ENCODE measurements at regions of chr12 and their contacts with region 1.

Region 1: GRCh38 chr12:8590842-8591550 is 21.7 kb downstream of the AICDA start:
- DNase-seq: no peak
- ATAC-seq: peak; percentile 57
- H3K4me3 Mint-ChIP-seq: no peak overlapping the region
- H3K27ac Mint-ChIP-seq: no peak overlapping the region
- H3K4me1 Mint-ChIP-seq: peaks cover 6% of the 10 kb centered on the region
- H3K27me3 Mint-ChIP-seq: no peaks in the 10 kb centered on the region

Region 2: DNA sequence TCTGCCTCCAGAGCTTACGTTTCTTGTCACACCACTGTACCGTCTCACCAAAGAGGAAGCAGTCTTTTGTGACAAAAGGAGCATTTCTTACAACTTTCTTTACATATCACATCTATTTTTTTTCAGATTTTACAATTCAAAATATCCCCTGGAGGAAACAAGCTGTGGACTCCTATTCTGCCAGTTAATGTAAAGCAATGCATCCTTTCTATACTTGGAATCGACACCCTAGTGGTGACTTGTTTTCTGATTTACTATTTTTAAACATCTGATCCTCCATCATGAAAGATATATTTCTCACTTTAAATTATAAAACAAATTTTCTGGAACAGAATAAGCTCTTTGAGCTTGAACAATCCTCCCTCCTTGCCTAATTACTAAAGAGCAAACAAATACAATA is 13.1 kb before region 1 on chr12:
- CTCF ChIA-PET with region 1: interaction called, 15 read pairs
- POLR2A ChIA-PET with region 1: no interaction called
- DNase-seq: no peak
- ATAC-seq: no peak
- H3K4me3 Mint-ChIP-seq: no peak overlapping the region
- H3K27ac Mint-ChIP-seq: no peak overlapping the region
- H3K4me1 Mint-ChIP-seq: no peaks in the 10 kb centered on the region
- H3K27me3 Mint-ChIP-seq: peaks cover 2% of the 10 kb centered on the region